Common myeloid progenitor, CD34-positive (primary cell): ENCODE measurements at regions of chr9 and their contacts with region 1.

Region 1: GRCh38 chr9:110638381-110638954 is 30.1 kb upstream of the MUSK start:
- DNase-seq: peak; percentile 29 to 50 (median 49)
- H3K4me3 ChIP-seq: no peak overlapping the region
- H3K27ac ChIP-seq: no peak overlapping the region
- H3K4me1 ChIP-seq: peaks cover 0 to 12% (median 8%) of the 10 kb centered on the region in 4 experiments
- H3K27me3 ChIP-seq: no peaks in the 10 kb centered on the region

Region 2: GRCh38 chr9:110690962-110691549 is 52.6 kb after region 1 on chr9:
- CTCF ChIA-PET with region 1: no interaction called
- POLR2A ChIA-PET with region 1: no interaction called
- DNase-seq: peak in 2 of 3 donors; percentile 6 to 19
- H3K4me3 ChIP-seq: no peak overlapping the region
- H3K27ac ChIP-seq: no peak overlapping the region
- H3K4me1 ChIP-seq: no peaks in the 10 kb centered on the region
- H3K27me3 ChIP-seq: no peaks in the 10 kb centered on the region

Region 3: GRCh38 chr9:111298731-111299598 is 660.5 kb after region 1 on chr9:
- CTCF ChIA-PET with region 1: interaction called, 17 read pairs
- POLR2A ChIA-PET with region 1: no interaction called
- DNase-seq: peak; percentile 53 to 80 (median 74)
- H3K4me3 ChIP-seq: peak overlapping the region in 2 of 7 experiments; percentile 6 to 56
- H3K27ac ChIP-seq: no peak overlapping the region
- H3K4me1 ChIP-seq: peaks cover 0 to 8% (median 5%) of the 10 kb centered on the region in 4 experiments
- H3K27me3 ChIP-seq: no peaks in the 10 kb centered on the region